ENCODE measurements at regions of chr7 and their contacts with region 1.

Region 1: DNA sequence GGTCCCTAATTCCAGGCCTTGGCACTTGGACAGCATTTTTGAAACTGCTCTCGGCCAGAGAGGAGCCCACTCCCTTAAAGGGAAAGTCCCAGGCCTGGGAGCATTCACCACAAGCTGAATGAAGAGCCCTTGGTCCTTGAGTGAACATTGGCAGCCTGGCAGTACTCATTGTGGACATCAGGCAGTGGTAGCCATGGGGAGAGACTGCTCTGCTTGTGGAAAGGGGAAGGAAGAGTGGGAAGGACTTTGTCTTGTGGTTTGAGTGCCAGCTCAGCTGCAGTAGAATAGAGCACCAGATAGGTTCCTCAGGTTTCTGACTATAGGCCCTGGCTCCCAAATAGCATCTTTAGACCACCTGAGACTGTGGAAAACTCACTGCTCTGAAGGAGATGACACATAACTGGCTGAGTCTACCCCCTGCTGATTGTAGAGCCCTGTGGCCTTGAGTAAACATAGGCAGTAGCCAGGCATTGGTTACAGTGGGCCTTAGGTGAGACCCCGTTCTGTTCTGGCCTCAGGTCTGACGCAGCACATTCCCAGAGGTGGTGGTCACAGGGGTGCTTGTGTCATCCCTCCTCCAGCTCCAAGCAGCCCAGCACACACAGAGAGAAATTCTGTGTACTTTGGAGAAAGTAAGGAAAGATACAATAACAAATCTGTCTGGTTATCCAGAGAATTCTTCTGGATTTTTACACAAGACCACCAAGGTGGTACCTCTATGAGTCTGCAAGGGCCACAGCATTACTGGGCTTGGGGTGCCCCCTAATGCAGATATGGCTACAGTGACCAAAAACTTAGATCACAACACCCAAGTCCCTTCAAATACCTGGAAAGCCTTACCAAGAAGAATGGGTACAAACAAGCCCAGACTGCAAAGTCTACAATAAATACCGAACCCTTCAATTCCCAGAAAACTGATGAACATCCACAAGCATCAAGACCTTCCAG is 153.8 kb downstream of the GNAI1 start:
- DNase-seq: no peak
- ATAC-seq: no peak
- H3K4me3 ChIP-seq: no peak overlapping the region
- H3K27ac ChIP-seq: no peak overlapping the region
- H3K4me1 ChIP-seq: no peaks in the 10 kb centered on the region
- H3K27me3 ChIP-seq: no peaks in the 10 kb centered on the region
- CTCF ChIP-seq: peak; percentile 18

Region 2: GRCh38 chr7:79652619-79653018 is 635.8 kb before region 1 on chr7:
- intact Hi-C with region 1: no loop called
- DNase-seq: no peak
- ATAC-seq: no peak
- H3K4me3 ChIP-seq: no peak overlapping the region
- H3K27ac ChIP-seq: no peak overlapping the region
- H3K4me1 ChIP-seq: no peaks in the 10 kb centered on the region
- H3K27me3 ChIP-seq: no peaks in the 10 kb centered on the region
- CTCF ChIP-seq: no peak

Region 3: DNA sequence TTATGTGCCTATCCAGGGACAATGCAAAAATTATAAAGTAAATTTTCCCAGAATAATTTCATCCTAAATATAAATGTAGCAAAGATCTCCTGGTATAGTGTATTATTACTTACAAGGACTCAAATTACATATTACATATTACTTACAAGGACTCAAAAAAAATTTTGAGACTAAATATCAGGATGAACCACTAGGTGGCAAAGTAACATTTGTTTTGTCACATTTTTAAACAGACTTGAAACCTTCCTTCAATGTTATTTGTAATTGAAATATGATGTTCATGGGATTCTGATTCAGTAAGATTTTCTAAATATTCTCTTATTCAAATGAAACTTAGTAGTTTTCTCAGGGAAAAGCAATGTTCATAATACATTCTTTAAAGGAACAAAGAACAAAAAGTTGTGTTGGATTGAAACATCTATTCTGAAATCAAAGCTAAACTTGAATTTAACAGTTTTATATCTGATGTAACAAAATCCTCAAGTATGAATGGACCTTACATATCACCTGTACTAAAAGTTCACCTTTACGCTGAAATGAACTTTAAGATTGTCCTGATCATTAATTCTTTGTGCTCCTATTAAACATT is 228.1 kb before region 1 on chr7:
- intact Hi-C with region 1: loop called in 1 of 2 experiments (anchors 10 kb)
- DNase-seq: no peak
- ATAC-seq: no peak
- H3K4me3 ChIP-seq: no peak overlapping the region
- H3K27ac ChIP-seq: no peak overlapping the region
- H3K4me1 ChIP-seq: no peaks in the 10 kb centered on the region
- H3K27me3 ChIP-seq: no peaks in the 10 kb centered on the region
- CTCF ChIP-seq: peak; percentile 67